ENCODE measurements at regions of chr6 and their contacts with region 1.

Region 1: GRCh38 chr6:13604546-13605416 is 10.4 kb upstream of the NOL7 start:
- DNase-seq: peak in 1 of 2 experiments; percentile 40
- H3K4me3 ChIP-seq: no peak overlapping the region
- H3K4me3 Mint-ChIP-seq: no peak overlapping the region
- H3K27ac Mint-ChIP-seq: peak overlapping the region; percentile 26
- H3K4me1 ChIP-seq: peaks cover 23% of the 10 kb centered on the region
- H3K4me1 Mint-ChIP-seq: peaks cover 17% of the 10 kb centered on the region
- H3K27me3 ChIP-seq: no peaks in the 10 kb centered on the region
- H3K27me3 Mint-ChIP-seq: no peaks in the 10 kb centered on the region
- CTCF ChIP-seq: no peak

Region 2: DNA sequence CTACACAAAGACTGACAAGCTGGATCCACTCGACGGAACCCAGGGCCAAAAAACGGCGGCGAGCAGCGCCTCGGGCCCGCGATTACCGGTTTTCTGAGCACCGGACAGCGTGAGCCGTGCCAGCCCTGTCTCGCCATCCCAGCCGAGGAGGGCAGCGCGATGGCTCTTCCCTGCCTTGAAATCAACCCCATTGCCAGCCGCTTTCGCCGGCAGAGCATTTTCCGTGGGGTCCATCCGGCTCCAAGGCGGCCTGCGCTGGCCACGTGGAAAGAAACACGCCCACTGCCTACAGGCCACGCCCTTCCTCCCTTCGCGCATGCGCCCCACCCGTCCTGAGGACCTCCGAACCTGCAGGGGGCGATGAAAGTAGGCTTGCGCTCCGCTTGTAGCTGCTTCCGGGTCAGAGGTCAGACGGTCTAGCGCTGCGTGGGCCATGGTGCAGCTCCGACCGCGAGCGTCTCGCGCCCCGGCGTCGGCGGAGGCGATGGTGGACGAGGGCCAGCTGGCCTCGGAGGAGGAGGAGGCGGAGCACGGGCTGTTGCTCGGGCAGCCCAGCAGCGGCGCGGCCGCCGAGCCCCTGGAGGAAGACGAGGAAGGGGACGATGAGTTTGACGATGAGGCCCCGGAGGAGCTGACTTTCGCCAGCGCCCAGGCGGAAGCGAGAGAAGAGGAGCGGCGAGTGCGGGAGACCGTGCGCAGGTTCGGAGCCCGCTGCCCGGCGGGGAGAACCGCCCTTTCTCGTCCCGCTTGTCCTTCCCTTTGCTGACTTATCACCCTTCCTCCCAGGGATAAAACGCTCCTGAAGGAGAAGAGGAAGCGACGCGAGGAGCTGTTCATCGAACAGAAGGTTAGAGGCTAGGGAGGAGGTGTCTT is 10.4 kb after region 1 on chr6 and contains the start of gene NOL7:
- CTCF ChIA-PET with region 1: interaction called, 6 read pairs
- POLR2A ChIA-PET with region 1: interaction called, 22 read pairs
- intact Hi-C with region 1: no loop called
- DNase-seq: peak; percentile 97 to 98
- H3K4me3 ChIP-seq: peak within 1 kb of the TSS; percentile 87
- H3K4me3 Mint-ChIP-seq: peak within 1 kb of the TSS; percentile 100
- H3K27ac Mint-ChIP-seq: peak within 1 kb of the TSS; percentile 98
- H3K4me1 ChIP-seq: no peaks in the 10 kb centered on the region; the same call in 1 of the 2 replicates
- H3K4me1 Mint-ChIP-seq: peaks cover 7% of the 10 kb centered on the region
- H3K27me3 ChIP-seq: no peaks in the 10 kb centered on the region
- H3K27me3 Mint-ChIP-seq: no peaks in the 10 kb centered on the region
- CTCF ChIP-seq: peak; percentile 70 to 91
- total RNA-seq, gene NOL7: 85.4 and 92.9 TPM in 2 replicates

Region 3: GRCh38 chr6:14333556-14334305 is 729.0 kb after region 1 on chr6:
- CTCF ChIA-PET with region 1: no interaction called
- POLR2A ChIA-PET with region 1: no interaction called
- intact Hi-C with region 1: no loop called
- DNase-seq: no peak
- H3K4me3 ChIP-seq: no peak overlapping the region
- H3K4me3 Mint-ChIP-seq: no peak overlapping the region
- H3K27ac Mint-ChIP-seq: no peak overlapping the region
- H3K4me1 ChIP-seq: no peaks in the 10 kb centered on the region
- H3K4me1 Mint-ChIP-seq: no peaks in the 10 kb centered on the region
- H3K27me3 ChIP-seq: no peaks in the 10 kb centered on the region; the same call in 1 of the 2 replicates
- H3K27me3 Mint-ChIP-seq: peaks cover 3% of the 10 kb centered on the region
- CTCF ChIP-seq: no peak

Measured in Caco-2 (cell line).